ENCODE measurements at regions of chr22 and their contacts with region 1.

Region 1: GRCh38 chr22:19970479-19971275 is 29.1 kb upstream of the TXNRD2 start:
- DNase-seq: peak; percentile 84

Region 2: GRCh38 chr22:19800761-19801244 is 169.9 kb before region 1 on chr22:
- CTCF ChIA-PET with region 1: no interaction called
- POLR2A ChIA-PET with region 1: no interaction called
- DNase-seq: no peak

Region 3: DNA sequence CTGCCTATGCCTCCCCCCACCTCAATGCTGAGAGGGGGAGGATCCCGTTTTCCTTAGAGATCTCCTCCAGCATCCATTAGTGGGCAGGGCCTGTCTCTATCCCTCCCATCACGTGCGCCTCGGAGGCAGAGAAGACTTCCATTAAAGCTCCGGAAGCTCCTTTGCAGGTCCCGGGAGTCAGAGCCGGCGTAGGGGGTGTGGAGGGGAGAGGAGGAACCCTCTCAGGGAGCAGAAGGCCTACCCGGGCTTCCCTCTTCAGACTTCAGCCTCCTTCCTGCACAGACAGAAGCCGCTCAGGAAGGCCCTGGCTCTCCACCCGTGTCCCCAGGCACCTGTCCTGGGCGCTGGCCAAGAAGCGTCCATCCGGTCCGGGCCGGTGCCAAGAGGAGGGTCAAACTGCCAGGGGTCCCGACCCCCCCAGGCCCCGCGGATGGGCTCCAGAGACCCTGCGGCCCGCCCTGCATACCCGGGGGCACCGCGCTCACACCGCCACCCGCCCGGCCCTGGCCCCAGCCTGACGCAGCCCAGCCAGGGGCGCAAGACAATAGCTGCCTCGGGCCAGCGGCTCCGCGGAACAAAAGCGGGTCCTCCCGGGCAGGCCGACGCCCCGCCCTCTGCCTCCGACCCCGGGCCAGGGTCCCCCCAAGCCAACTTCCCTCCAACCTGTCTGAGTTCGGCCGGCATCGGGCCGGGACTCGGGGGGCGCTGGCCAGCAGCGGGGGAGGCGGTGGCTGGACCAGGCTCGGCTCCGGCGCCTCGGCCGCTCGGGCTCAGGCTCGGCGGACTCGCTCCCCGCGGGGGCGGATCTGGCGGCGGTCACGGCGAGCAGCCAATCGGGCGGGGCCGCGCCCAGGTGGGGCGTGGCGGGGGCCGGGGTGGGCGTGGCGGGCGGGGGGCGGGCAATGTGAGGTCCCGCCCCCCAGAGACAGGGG is 16.0 kb after region 1 on chr22:
- CTCF ChIA-PET with region 1: no interaction called
- POLR2A ChIA-PET with region 1: interaction called, 25 read pairs
- DNase-seq: peak; percentile 99

Region 4: DNA sequence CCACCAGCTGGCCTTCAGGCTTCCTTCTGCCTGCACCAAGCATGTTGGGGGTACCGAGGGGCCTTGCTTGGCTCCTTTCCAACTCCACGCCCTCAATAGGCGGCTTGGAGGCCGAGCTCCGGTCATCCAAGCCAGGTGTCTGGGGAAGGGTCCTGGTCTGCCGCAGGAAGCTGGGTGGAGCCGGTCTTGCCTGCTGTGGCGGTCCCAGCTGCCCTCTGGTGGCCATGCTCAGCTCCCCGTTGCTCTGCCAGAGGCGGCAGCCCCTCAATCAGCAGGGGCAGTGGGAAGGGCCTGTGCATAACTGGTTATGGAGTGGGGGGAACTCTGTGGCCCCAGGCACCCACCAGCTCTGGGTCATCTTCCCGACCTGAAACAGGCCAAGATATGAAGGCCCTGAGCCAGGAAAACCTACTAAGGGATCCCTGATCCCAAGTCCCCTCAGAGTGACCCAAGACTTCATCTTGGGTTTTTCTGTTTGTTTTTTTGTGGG is 42.8 kb after region 1 on chr22:
- CTCF ChIA-PET with region 1: interaction called, 35 read pairs
- POLR2A ChIA-PET with region 1: interaction called, 18 read pairs
- DNase-seq: peak; percentile 78